ENCODE measurements at regions of chr17 and their contacts with region 1.

Region 1: DNA sequence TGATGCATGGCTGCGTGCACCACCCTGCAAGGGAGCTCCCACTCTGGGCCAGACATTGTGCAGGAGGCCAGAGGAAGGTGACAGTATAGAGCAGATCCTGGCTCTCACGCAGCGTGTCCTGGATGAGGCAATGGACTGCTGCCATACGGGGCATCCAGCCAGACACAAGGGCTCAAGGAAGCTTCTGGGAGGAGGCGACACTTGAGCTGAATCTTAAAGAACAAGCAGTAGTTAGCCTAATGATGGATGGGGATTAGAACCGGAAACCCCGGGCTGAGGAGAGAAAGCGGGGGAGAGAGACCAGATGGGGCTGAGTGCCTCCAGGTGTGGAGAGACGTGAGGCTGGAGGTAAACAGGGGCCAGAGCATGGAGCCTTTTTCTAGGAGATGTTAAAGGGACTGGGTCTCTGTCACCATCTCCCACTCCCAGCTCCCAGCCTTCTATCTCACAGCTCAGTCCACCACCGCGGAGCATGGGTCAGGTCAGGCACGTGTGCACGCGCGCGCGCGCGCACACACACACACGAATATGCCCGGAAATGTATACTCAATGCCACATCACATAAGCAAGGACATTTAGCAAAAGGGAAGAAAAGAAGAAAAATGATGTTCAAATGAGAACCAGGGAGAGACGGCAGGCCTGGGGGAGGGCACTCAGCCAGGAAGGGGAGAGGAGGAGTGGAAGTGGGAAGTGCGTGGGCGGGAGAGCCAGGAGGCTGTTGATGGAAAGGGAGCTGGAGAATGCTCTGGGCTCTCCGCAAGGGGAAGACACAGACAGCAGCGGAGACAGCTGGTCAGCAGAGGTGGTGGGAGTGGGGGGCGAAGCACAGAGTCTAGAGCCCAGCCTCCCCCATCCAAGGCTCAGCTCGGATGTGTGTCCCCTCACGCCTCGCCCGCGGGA is 46.2 kb downstream of the CCDC42 start:
- DNase-seq: no peak
- H3K4me3 ChIP-seq: no peak overlapping the region
- CTCF ChIP-seq: no peak

Region 2: GRCh38 chr17:8621585-8621984 is 76.8 kb before region 1 on chr17:
- in situ Hi-C with region 1: loop called (anchors 5 kb)
- DNase-seq: no peak
- H3K4me3 ChIP-seq: no peak overlapping the region
- CTCF ChIP-seq: no peak

Region 3: GRCh38 chr17:8791910-8792270 is 93.5 kb after region 1 on chr17:
- in situ Hi-C with region 1: loop called (anchors 5 kb)
- DNase-seq: peak; percentile 13
- H3K4me3 ChIP-seq: no peak overlapping the region
- CTCF ChIP-seq: no peak

Measured in astrocyte of the cerebellum (primary cell).